ENCODE measurements at regions of chr6 and their contacts with region 1.

Region 1: DNA sequence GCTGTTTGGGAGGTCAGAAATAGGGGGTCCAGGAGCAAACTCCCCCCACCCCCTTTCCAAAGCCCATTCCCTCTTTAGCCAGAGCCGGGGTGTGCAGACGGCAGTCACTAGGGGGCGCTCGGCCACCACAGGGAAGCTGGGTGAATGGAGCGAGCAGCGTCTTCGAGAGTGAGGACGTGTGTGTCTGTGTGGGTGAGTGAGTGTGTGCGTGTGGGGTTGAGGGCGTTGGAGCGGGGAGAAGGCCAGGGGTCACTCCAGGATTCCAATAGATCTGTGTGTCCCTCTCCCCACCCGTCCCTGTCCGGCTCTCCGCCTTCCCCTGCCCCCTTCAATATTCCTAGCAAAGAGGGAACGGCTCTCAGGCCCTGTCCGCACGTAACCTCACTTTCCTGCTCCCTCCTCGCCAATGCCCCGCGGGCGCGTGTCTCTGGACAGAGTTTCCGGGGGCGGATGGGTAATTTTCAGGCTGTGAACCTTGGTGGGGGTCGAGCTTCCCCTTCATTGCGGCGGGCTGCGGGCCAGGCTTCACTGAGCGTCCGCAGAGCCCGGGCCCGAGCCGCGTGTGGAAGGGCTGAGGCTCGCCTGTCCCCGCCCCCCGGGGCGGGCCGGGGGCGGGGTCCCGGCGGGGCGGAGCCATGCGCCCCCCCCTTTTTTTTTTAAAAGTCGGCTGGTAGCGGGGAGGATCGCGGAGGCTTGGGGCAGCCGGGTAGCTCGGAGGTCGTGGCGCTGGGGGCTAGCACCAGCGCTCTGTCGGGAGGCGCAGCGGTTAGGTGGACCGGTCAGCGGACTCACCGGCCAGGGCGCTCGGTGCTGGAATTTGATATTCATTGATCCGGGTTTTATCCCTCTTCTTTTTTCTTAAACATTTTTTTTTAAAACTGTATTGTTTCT is at the start of gene VEGFA:
- DNase-seq: peak in 1 of 2 experiments; percentile 97
- H3K4me3 ChIP-seq: peak within 1 kb of the TSS; percentile 77 to 91 (median 85)
- H3K27ac ChIP-seq: no peak within 1 kb of the TSS; the same call in 1 of the 2 replicates
- H3K4me1 ChIP-seq: peaks cover 3 to 31% (median 18%) of the 10 kb centered on the region in 4 experiments
- H3K27me3 ChIP-seq: peaks cover 0 to 7% (median 0%) of the 10 kb centered on the region in 4 experiments; a peak in 1 of 7 replicates
- CTCF ChIP-seq: peak in 2 of 3 experiments; percentile 89 to 96; a peak in 3 of 4 replicates
- EP300 ChIP-seq: no peak
- POLR2A ChIP-seq: no peak
- RAD21 ChIP-seq: peak; percentile 92 to 93
- total RNA-seq, gene VEGFA: 40.7 and 42.2 TPM in 2 replicates

Region 2: DNA sequence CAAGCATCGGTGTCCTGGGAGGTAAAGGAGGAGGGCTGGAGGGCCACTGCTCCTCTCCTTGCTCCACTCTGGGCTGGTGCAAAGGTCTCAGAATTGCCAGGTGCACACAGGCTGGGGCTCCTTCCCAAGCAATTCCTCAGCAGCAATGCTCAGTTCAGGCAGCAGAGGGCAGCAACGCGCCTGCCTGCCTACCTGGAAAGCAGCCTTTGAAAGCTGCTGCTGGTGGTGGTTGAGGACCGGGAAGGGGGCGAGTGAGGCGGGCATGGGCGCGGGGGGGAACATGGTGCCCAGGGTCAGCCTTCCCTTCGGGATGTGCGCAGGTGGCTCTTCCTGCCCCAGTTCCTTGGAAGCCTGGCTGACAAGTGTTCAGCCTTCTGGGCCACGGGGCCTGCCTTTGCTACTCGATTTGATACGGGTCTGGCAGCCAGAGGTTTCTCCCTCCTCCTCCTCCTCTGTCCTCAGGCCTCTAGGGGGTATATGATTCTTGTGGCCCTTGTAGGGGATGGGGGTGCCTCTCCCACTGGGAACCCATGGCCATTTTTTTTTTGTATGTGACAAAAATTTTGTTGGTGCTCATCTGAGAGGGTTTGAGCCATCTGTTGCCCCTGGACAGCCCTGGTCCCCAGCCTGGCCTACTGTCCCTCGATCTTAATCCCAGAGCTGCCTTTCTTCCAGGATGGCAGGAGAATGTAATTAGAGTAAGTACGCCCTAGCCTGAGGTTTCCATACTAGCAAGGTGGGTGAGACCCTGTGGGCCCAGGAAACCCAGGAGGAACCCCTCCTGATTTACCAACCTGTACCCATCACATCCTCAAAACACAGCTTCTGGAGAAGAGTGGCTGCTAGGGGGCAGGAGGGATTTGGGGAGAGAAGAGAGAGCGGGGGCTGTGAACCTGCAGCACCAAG is 102.3 kb before region 1 on chr6:
- CTCF ChIA-PET with region 1: interaction called, 146 read pairs
- POLR2A ChIA-PET with region 1: interaction called, 38 read pairs
- DNase-seq: peak; percentile 68 to 97
- H3K4me3 ChIP-seq: peak overlapping the region in 3 of 4 experiments; percentile 11 to 48 (median 23); a peak in 4 of 8 replicates
- H3K27ac ChIP-seq: no peak overlapping the region
- H3K4me1 ChIP-seq: peaks cover 5 to 27% (median 22%) of the 10 kb centered on the region in 4 experiments
- H3K27me3 ChIP-seq: no peaks in the 10 kb centered on the region; a peak in 2 of 7 replicates
- CTCF ChIP-seq: peak in 2 of 3 experiments; percentile 94 to 99; a peak in 3 of 4 replicates
- EP300 ChIP-seq: no peak
- POLR2A ChIP-seq: no peak
- RAD21 ChIP-seq: peak; percentile 94 to 95

Region 3: GRCh38 chr6:43723737-43724295 is 46.0 kb before region 1 on chr6:
- CTCF ChIA-PET with region 1: interaction called, 89 read pairs
- POLR2A ChIA-PET with region 1: interaction called, 18 read pairs
- DNase-seq: peak; percentile 49 to 85
- H3K4me3 ChIP-seq: no peak overlapping the region
- H3K27ac ChIP-seq: no peak overlapping the region
- H3K4me1 ChIP-seq: peaks cover 0 to 8% (median 0%) of the 10 kb centered on the region in 4 experiments; a peak in 4 of 7 replicates
- H3K27me3 ChIP-seq: no peaks in the 10 kb centered on the region
- CTCF ChIP-seq: peak; percentile 77 to 82 (median 81)
- EP300 ChIP-seq: no peak
- POLR2A ChIP-seq: no peak
- RAD21 ChIP-seq: peak; percentile 89

Region 4: DNA sequence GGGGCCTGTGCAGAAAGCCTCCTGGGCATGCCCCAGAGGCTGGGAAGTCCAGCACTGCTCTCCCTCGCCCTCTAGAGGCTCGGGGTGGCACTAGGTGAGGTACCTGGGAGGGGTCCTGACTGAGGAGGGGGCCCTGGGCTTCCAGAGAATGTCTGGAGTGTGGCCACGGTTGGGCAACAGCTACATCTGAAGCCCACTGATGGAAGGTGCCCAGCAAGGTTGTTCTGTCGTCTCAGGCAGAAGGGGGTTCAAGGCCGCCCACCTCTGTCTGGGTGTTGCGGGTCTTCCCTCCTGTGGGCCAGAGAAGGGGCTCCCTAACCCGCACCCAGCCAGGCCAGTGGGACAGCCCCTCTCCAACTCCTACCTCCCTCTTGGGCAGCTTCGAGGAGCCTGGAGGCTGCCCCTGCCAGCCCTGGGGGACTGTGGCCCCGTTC is 11.1 kb before region 1 on chr6:
- CTCF ChIA-PET with region 1: interaction called, 78 read pairs
- POLR2A ChIA-PET with region 1: interaction called, 22 read pairs
- DNase-seq: peak in 1 of 2 experiments; percentile 91
- H3K4me3 ChIP-seq: no peak overlapping the region
- H3K27ac ChIP-seq: no peak overlapping the region
- H3K4me1 ChIP-seq: peaks cover 0 to 9% (median 5%) of the 10 kb centered on the region in 4 experiments; a peak in 5 of 7 replicates
- H3K27me3 ChIP-seq: no peaks in the 10 kb centered on the region
- CTCF ChIP-seq: peak; percentile 87 to 95 (median 94)
- EP300 ChIP-seq: no peak
- POLR2A ChIP-seq: no peak
- RAD21 ChIP-seq: peak; percentile 81 to 88

Region 5: DNA sequence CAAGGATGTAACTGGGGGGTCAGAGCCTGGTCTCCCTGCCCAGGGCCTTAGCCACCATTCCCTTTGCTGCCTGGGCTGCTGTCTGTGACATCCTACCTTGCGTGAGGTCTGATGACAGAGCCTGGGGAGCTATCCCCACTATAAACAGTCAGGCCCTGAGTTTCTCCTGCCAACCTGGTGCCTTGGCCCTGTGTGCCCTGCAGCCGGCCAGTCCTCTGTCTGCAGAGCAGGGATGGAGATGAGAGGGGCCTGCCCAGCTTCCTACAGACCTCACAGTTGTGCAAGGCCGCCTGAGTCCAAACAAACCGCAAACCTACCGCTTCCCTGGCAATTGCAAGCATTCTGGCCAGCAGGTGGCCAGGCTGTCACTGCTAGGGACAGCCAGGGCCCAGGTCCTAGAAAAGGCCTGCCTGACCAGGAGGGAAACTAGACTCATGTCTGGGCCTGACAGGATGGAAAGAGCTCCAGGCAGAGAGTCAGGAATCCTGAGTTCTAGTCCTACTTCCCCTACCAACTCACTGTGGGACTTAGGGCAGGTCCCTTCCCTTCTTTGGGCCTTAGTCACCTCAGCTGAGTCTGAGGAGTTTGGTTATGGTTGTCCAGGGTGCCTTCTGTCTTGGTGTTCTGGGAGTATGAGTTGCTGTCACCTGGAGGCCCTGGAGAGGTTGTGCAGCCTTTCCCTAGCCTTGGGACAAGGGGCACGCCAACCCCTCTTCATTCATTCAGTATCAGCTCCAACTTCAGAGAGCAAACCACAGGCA is 86.4 kb after region 1 on chr6:
- CTCF ChIA-PET with region 1: interaction called, 21 read pairs
- POLR2A ChIA-PET with region 1: interaction called, 3 read pairs
- DNase-seq: no peak
- H3K4me3 ChIP-seq: no peak overlapping the region
- H3K27ac ChIP-seq: no peak overlapping the region
- H3K4me1 ChIP-seq: peaks cover 0 to 6% (median 3%) of the 10 kb centered on the region in 4 experiments; a peak in 4 of 7 replicates
- H3K27me3 ChIP-seq: no peaks in the 10 kb centered on the region
- CTCF ChIP-seq: peak; percentile 42 to 71 (median 57); a peak in 3 of 4 replicates
- EP300 ChIP-seq: no peak
- POLR2A ChIP-seq: no peak
- RAD21 ChIP-seq: peak; percentile 35 to 58; a peak in 3 of 4 replicates

Region 6: GRCh38 chr6:43951063-43951755 is 181.4 kb after region 1 on chr6:
- CTCF ChIA-PET with region 1: interaction called, 75 read pairs
- POLR2A ChIA-PET with region 1: interaction called, 17 read pairs
- DNase-seq: peak; percentile 56 to 85
- H3K4me3 ChIP-seq: no peak overlapping the region
- H3K27ac ChIP-seq: no peak overlapping the region
- H3K4me1 ChIP-seq: peaks cover 0 to 5% (median 1%) of the 10 kb centered on the region in 4 experiments; a peak in 3 of 7 replicates
- H3K27me3 ChIP-seq: no peaks in the 10 kb centered on the region
- CTCF ChIP-seq: peak; percentile 96 to 98 (median 98)
- EP300 ChIP-seq: no peak
- POLR2A ChIP-seq: no peak
- RAD21 ChIP-seq: peak; percentile 98

Region 7: GRCh38 chr6:44030812-44031454 is 261.2 kb after region 1 on chr6:
- CTCF ChIA-PET with region 1: no interaction called
- POLR2A ChIA-PET with region 1: no interaction called
- DNase-seq: no peak
- H3K4me3 ChIP-seq: no peak overlapping the region
- H3K27ac ChIP-seq: no peak overlapping the region
- H3K4me1 ChIP-seq: no peaks in the 10 kb centered on the region; a peak in 1 of 7 replicates
- H3K27me3 ChIP-seq: no peaks in the 10 kb centered on the region; a peak in 1 of 7 replicates
- CTCF ChIP-seq: no peak
- EP300 ChIP-seq: no peak
- POLR2A ChIP-seq: no peak
- RAD21 ChIP-seq: no peak

Region 8: DNA sequence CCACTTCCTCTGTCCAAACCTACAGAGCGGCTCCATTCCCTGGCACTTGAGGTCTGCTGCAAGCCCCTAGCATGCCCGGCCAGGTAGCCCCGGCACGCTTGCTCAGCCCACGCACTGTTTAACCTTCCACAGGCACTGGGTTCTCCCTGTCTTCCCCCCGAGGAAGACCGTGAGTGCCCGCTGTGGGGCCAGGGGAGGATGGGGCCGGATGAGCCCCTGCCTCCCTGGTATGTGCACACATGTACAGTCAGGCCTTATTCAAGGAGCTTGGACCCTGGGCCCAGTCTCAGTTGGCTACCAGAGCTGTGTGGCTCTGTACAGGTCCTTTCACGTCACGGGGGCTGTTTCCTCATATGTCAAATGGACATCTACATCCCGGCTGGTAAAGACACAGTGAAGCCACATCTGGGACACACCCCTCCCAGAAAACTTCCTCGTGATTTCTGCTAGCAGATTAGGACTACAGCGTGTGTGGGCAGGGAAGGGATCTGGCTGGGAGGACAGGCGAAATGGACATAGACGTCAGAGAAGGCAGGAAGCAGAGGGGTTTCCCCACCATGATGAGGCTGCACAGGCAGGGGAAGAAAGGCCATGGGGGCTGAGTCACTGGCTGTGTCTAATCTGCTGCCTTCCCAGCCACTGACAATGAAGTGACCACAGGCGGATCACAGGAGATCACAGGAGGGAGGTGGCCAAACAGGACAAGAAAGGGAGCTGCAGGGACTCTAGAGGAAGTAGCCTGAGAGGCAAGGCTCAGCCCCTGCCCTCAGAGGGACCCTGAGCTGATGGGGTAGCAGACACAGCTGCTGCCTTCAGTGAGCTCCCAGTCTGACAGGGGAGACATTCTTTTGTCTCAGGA is 294.5 kb after region 1 on chr6:
- CTCF ChIA-PET with region 1: interaction called, 25 read pairs
- POLR2A ChIA-PET with region 1: no interaction called
- DNase-seq: no peak
- H3K4me3 ChIP-seq: no peak overlapping the region
- H3K27ac ChIP-seq: no peak overlapping the region
- H3K4me1 ChIP-seq: peaks cover 0 to 16% (median 9%) of the 10 kb centered on the region in 4 experiments; a peak in 5 of 7 replicates
- H3K27me3 ChIP-seq: no peaks in the 10 kb centered on the region; a peak in 1 of 7 replicates
- CTCF ChIP-seq: no peak
- EP300 ChIP-seq: no peak
- POLR2A ChIP-seq: no peak
- RAD21 ChIP-seq: no peak